ENCODE measurements at regions of chr3 and their contacts with region 1.

Region 1: GRCh38 chr3:43621656-43622432 is at the start of gene ANO10:
- DNase-seq: peak; percentile 90
- H3K4me3 Mint-ChIP-seq: peak within 1 kb of the TSS; percentile 91
- H3K27ac Mint-ChIP-seq: peak within 1 kb of the TSS; percentile 70
- H3K4me1 Mint-ChIP-seq: peaks cover 32% of the 10 kb centered on the region
- H3K27me3 Mint-ChIP-seq: peaks cover 26% of the 10 kb centered on the region
- total RNA-seq, gene ANO10: 4.2 and 4.6 TPM in 2 replicates

Region 2: DNA sequence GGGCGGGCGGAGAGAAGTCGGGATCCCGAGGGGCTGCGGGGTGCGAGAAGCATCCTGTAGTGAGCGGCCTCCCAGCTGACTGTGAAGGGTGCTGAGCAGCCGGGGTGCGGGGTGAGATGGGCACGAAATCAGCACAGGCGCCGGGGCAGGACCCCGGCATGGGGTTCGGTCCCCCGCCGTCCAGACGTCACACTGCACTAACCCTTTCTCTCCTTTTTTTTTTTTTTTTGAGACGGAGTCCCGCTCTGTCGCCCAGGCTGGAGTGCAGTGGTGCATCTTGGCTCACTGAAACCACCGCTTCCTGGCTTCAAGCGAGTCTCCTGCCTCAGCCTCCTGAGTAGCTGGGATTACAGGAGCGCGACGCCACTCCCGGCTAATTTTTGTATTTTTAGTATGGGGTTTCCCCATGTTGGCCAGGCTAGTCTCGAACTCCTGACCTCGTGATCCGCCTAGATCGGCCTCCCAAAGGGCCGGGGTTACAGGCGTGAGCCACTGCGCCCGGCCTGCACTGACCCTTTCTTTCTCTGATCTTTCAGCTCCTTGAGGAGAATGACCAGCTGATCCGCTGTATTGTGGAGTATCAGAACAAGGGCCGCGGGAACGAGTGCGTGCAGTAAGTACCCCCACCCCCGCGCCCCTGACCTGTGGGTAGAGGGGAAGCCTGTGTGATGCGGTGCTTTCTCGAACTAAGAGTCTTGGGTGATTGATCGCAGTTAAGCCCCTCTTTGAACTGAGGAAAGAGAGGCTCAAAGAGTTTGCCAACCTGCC is 1030.7 kb before region 1 on chr3:
- intact Hi-C with region 1: loop called (anchors 5 kb)
- DNase-seq: no peak
- H3K4me3 Mint-ChIP-seq: peak overlapping the region; percentile 98
- H3K27ac Mint-ChIP-seq: peak overlapping the region; percentile 99
- H3K4me1 Mint-ChIP-seq: peaks cover 41% of the 10 kb centered on the region
- H3K27me3 Mint-ChIP-seq: no peaks in the 10 kb centered on the region

Region 3: GRCh38 chr3:42880601-42881451 is 741.0 kb before region 1 on chr3:
- intact Hi-C with region 1: loop called (anchors 1 kb)
- DNase-seq: peak; percentile 83
- H3K4me3 Mint-ChIP-seq: peak overlapping the region; percentile 82
- H3K27ac Mint-ChIP-seq: peak overlapping the region; percentile 59
- H3K4me1 Mint-ChIP-seq: peaks cover 16% of the 10 kb centered on the region
- H3K27me3 Mint-ChIP-seq: peaks cover 2% of the 10 kb centered on the region

Region 4: GRCh38 chr3:43162230-43163084 is 459.4 kb before region 1 on chr3:
- intact Hi-C with region 1: loop called (anchors 10 kb)
- DNase-seq: peak; percentile 53
- H3K4me3 Mint-ChIP-seq: peak overlapping the region; percentile 72
- H3K27ac Mint-ChIP-seq: peak overlapping the region; percentile 83
- H3K4me1 Mint-ChIP-seq: peaks cover 23% of the 10 kb centered on the region
- H3K27me3 Mint-ChIP-seq: no peaks in the 10 kb centered on the region

Region 5: DNA sequence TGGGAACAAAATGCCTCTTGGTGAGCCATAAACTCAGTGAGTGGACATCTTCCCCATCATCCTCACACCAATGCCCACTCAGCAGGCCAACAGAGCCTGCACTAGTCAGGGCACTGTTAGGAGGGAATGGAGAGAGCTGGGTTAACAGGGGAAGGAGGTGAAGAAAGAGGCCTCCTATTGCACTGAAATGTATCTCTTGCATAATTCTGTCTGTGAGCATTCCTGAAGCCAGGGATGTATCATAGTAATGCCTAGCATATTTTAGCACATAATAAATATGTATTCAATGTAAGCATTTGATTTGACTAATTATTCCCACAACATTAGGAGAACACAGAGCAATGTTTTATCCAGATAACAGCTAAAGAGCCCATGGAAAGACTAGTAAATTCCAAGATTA is 81.2 kb before region 1 on chr3:
- intact Hi-C with region 1: no loop called
- DNase-seq: no peak
- H3K4me3 Mint-ChIP-seq: no peak overlapping the region
- H3K27ac Mint-ChIP-seq: no peak overlapping the region
- H3K4me1 Mint-ChIP-seq: no peaks in the 10 kb centered on the region
- H3K27me3 Mint-ChIP-seq: peaks cover 2% of the 10 kb centered on the region

Region 6: DNA sequence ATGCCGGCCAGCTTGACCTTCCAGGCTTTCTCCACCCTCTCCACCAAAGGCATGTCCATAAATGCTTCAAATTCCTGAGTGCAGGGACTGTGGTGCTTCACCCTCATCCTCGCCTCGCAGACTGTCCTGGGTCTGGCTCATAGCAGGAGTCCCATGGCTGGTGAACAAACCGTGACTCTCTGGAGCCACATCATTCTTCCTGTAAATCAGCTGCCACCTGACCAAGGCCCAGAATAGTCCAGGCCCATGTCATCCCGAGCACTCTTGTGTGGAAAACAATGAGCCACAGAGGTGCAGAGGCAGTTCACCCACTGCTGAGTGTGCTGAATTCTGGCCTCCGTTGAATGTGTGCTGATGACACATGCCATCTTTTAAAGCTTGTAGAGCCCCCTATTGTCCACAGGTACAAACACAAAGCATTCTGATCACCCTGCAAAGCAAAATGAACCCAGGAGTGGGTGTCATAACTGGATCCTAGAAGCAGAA is 137.5 kb after region 1 on chr3:
- intact Hi-C with region 1: loop called (anchors 5 kb)
- DNase-seq: no peak
- H3K4me3 Mint-ChIP-seq: no peak overlapping the region
- H3K27ac Mint-ChIP-seq: no peak overlapping the region
- H3K4me1 Mint-ChIP-seq: peaks cover 15% of the 10 kb centered on the region
- H3K27me3 Mint-ChIP-seq: peaks cover 11% of the 10 kb centered on the region

Measured in activated T-helper 1 cell treated with anti-CD3 and anti-CD28 coated beads, Interleukin-12 subunit alpha, Interleukin-12 subunit beta, Interleukin-2, Interleukin-4 antibody, amounts not matched to agents 30 ng/mL and 10 ng/mL and 1 ng/mL, durations not matched to agents 14 hours and 24 hours and 36 hours (primary cell).